Posterior vena cava (tissue), 2 donors: ENCODE measurements at regions of chr5 and their contacts with region 1.

Region 1: GRCh38 chr5:158695595-158696330 is 404.0 kb downstream of the EBF1 start:
- DNase-seq: peak; percentile 93

Region 2: DNA sequence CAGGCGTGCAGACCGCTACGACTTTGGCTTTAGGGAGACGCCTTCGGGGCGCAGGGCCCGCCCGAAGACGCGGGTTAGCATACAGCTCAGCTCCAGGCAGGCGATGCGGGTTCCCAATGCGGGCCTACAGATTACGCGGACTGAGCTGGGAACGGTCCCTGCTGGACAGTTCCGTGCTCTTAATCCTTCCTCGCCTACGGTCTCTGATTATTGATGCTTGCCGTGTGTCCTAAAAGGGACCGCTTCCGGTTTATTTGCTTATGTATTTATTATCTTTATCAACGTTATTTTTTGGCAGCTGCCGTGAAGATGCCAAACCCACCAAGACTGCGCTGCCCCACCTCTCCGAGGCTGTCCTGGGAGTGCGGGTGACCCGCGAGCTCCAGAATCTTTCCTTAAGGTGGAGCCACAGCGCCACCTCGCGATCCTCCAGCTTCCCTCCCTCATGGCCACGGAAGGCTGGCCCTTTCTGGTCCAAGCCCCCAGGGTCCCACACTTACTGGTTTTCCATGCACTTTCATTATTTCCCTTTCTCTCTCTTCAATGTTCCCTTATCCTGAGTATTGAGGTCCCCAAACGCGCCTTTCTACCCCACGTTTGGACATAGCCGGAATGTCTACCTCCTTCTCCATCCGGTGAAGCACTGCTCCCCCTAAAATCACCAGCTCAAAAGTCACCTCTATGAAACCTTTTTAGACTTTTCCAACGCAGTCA is 411.0 kb after region 1 on chr5:
- intact Hi-C with region 1: loop called in 1 of 2 experiments (anchors 5 kb)
- DNase-seq: peak; percentile 94